Panc1 (cell line): ENCODE measurements at regions of chr1 and their contacts with region 1.

Region 1: GRCh38 chr1:178749581-178750166 is 24.6 kb downstream of the RALGPS2 start:
- DNase-seq: no peak
- ATAC-seq: no peak
- H3K4me3 ChIP-seq: no peak overlapping the region
- H3K27ac ChIP-seq: no peak overlapping the region
- H3K4me1 ChIP-seq: no peaks in the 10 kb centered on the region
- H3K27me3 ChIP-seq: no peaks in the 10 kb centered on the region
- CTCF ChIP-seq: no peak

Region 2: GRCh38 chr1:177838892-177839291 is 910.8 kb before region 1 on chr1:
- CTCF ChIA-PET with region 1: no interaction called
- POLR2A ChIA-PET with region 1: interaction called, 16 read pairs
- in situ Hi-C with region 1: no loop called
- intact Hi-C with region 1: no loop called
- DNase-seq: no peak
- ATAC-seq: no peak
- H3K4me3 ChIP-seq: no peak overlapping the region
- H3K27ac ChIP-seq: no peak overlapping the region
- H3K4me1 ChIP-seq: no peaks in the 10 kb centered on the region
- H3K27me3 ChIP-seq: no peaks in the 10 kb centered on the region
- CTCF ChIP-seq: no peak

Region 3: DNA sequence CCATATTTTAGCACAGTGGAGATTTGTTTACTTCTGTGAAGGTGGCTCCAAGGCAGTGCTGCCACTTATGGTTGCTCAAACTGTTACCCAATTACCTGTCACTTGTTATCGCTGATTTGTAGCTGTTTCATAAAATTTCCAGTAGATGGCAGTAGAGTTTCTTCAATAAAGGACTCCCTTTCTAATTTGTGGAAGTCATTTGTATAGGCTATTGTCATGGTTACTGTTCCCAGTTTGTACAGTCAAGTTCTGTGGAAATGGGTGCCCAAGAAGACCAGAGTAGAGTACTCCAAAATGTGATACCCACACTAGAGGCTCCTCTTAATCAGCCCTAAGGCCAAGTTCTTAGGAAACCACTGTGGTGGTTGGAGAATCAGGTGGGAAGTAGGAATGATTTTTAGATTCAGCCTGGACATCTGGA is 439.0 kb before region 1 on chr1:
- CTCF ChIA-PET with region 1: no interaction called
- POLR2A ChIA-PET with region 1: no interaction called
- in situ Hi-C with region 1: no loop called
- intact Hi-C with region 1: loop called (anchors 10 kb)
- DNase-seq: no peak
- ATAC-seq: peak; percentile 85
- H3K4me3 ChIP-seq: no peak overlapping the region
- H3K27ac ChIP-seq: no peak overlapping the region
- H3K4me1 ChIP-seq: peaks cover 12% of the 10 kb centered on the region
- H3K27me3 ChIP-seq: no peaks in the 10 kb centered on the region
- CTCF ChIP-seq: peak; percentile 73

Region 4: GRCh38 chr1:178542560-178543356 is 206.9 kb before region 1 on chr1:
- CTCF ChIA-PET with region 1: interaction called, 7 read pairs
- POLR2A ChIA-PET with region 1: no interaction called
- in situ Hi-C with region 1: no loop called
- intact Hi-C with region 1: loop called (anchors 2 kb)
- DNase-seq: no peak
- ATAC-seq: peak; percentile 90
- H3K4me3 ChIP-seq: peak overlapping the region; percentile 89 to 95
- H3K27ac ChIP-seq: peak overlapping the region; percentile 84
- H3K4me1 ChIP-seq: peaks cover 12% of the 10 kb centered on the region
- H3K27me3 ChIP-seq: no peaks in the 10 kb centered on the region
- CTCF ChIP-seq: peak; percentile 99

Region 5: DNA sequence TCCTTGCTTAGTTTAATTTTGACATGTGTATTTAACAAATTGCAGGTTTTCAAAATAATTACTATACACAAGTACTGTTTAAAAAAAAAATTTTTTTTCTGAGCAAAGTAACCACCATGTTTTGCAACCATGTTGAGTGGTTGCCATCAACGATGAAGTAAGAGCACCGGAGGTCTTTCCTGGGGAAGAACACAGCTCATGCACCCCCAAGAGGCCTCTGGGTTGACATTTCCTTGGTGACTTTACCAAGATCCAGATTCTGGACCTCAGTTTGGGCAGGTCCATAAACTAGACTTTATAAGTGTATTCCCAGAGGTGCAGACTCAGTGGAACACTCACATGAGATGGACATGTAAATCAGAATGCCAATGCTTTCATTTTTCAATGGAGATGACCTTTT is 61.4 kb before region 1 on chr1:
- CTCF ChIA-PET with region 1: interaction called, 11 read pairs
- POLR2A ChIA-PET with region 1: no interaction called
- in situ Hi-C with region 1: no loop called
- intact Hi-C with region 1: no loop called
- DNase-seq: no peak
- ATAC-seq: no peak
- H3K4me3 ChIP-seq: no peak overlapping the region
- H3K27ac ChIP-seq: no peak overlapping the region
- H3K4me1 ChIP-seq: no peaks in the 10 kb centered on the region
- H3K27me3 ChIP-seq: no peaks in the 10 kb centered on the region
- CTCF ChIP-seq: no peak

Region 6: DNA sequence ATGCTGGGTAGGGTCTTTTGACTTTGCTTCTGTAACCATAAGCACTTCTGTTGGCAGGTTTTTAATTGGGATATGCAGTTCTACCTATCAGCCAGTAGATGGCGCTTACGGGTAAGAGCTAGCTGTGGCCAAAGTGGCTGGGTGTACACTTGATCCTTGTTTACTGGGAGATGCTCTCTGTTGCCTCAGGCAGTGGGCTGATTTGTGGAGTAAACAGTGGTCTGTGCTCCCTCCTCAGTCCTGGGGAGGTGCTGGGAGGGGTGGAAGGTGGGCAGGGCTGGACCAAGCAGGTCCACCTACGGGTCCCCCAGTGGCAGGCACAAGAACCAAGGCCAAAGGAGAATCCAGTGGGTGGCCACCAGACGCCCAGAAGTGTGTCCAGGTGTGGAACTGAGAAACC is 18.7 kb after region 1 on chr1:
- CTCF ChIA-PET with region 1: interaction called, 14 read pairs
- POLR2A ChIA-PET with region 1: no interaction called
- in situ Hi-C with region 1: no loop called
- intact Hi-C with region 1: no loop called
- DNase-seq: peak; percentile 32
- ATAC-seq: no peak
- H3K4me3 ChIP-seq: no peak overlapping the region
- H3K27ac ChIP-seq: no peak overlapping the region
- H3K4me1 ChIP-seq: no peaks in the 10 kb centered on the region
- H3K27me3 ChIP-seq: no peaks in the 10 kb centered on the region
- CTCF ChIP-seq: peak; percentile 85

Region 7: DNA sequence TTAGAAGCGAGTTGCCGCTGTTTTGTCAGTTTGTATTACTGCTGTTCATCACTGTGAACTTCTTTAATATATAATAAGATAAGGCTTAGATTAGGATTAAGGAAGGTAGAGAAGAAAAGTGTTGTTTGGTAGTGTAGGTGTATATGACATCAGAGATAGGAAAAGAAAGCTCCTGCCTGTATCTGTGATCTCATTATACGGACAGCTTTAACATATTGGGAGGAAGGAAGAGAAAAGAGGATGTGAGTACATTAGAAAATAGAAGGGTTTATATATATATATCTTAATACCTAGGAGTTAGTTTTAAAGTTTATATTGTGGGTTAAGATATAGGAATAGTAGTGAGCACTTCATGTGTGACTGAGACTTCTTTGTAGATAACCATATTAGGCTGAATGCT is 46.3 kb after region 1 on chr1:
- CTCF ChIA-PET with region 1: no interaction called
- POLR2A ChIA-PET with region 1: no interaction called
- in situ Hi-C with region 1: no loop called
- intact Hi-C with region 1: no loop called
- DNase-seq: no peak
- ATAC-seq: no peak
- H3K4me3 ChIP-seq: no peak overlapping the region
- H3K27ac ChIP-seq: no peak overlapping the region
- H3K4me1 ChIP-seq: no peaks in the 10 kb centered on the region
- H3K27me3 ChIP-seq: no peaks in the 10 kb centered on the region
- CTCF ChIP-seq: no peak